ENCODE measurements at regions of chr12 and their contacts with region 1.

Region 1: GRCh38 chr12:48681738-48682532 is at the start of gene KANSL2:
- DNase-seq: peak; percentile 99
- H3K4me3 Mint-ChIP-seq: peak within 1 kb of the TSS; percentile 92
- H3K27ac Mint-ChIP-seq: peak within 1 kb of the TSS; percentile 98
- H3K4me1 Mint-ChIP-seq: peaks cover 42% of the 10 kb centered on the region
- H3K27me3 Mint-ChIP-seq: no peaks in the 10 kb centered on the region
- total RNA-seq, gene KANSL2: 44.1 to 44.5 TPM

Region 2: DNA sequence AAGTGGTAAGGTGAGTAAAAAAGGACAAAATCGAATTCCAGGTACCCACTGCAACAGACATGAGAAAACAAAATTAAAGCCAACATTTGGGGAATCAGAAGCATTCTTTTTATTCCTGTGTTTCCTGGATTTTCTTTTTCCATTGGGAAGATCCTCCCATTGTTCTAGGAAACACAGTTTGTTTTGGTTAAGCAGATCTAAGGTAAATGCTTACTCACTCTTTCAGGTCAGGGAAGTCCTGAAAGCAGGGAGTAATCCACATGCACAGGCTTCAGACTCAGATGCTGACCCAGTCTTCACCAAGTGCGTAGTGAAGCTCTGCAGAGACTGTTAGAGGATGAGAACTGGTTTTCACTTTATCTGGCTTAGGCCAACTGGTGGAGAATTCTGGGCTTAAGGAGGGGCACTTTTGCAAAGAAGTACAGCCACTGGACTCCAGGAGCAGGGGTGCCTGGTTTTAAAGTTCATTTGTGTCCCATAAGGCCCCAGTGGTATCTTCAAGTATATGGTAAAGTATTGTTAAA is 1033.8 kb before region 1 on chr12:
- CTCF ChIA-PET with region 1: no interaction called
- POLR2A ChIA-PET with region 1: no interaction called
- DNase-seq: no peak
- H3K4me3 Mint-ChIP-seq: no peak overlapping the region
- H3K27ac Mint-ChIP-seq: no peak overlapping the region
- H3K4me1 Mint-ChIP-seq: peaks cover 11% of the 10 kb centered on the region
- H3K27me3 Mint-ChIP-seq: no peaks in the 10 kb centered on the region

Region 3: DNA sequence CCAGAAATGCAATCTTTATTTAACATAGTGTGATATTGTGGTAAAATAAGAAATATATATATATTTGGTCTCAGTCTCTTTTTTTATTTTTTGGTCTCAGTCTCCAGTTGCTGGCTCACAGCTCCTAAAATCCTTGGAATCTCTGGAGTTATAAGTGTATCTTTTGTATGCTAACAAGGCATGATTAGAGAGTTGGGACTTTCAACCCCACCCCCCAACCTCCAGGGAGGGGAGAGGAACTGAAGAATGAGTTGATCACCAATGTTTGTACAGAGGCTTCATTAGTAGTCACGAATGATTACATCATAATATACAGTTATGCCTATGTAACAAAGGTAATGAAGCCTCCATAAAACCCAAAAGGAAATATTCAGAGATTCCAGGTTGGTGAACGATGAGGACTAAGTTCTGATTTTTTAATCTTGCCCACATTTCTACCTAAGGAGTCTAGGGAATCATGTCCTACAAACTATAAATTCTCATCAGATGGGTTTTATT is 89.3 kb before region 1 on chr12:
- CTCF ChIA-PET with region 1: no interaction called
- POLR2A ChIA-PET with region 1: no interaction called
- DNase-seq: no peak
- H3K4me3 Mint-ChIP-seq: no peak overlapping the region
- H3K27ac Mint-ChIP-seq: no peak overlapping the region
- H3K4me1 Mint-ChIP-seq: no peaks in the 10 kb centered on the region
- H3K27me3 Mint-ChIP-seq: peaks cover 33% of the 10 kb centered on the region

Region 4: DNA sequence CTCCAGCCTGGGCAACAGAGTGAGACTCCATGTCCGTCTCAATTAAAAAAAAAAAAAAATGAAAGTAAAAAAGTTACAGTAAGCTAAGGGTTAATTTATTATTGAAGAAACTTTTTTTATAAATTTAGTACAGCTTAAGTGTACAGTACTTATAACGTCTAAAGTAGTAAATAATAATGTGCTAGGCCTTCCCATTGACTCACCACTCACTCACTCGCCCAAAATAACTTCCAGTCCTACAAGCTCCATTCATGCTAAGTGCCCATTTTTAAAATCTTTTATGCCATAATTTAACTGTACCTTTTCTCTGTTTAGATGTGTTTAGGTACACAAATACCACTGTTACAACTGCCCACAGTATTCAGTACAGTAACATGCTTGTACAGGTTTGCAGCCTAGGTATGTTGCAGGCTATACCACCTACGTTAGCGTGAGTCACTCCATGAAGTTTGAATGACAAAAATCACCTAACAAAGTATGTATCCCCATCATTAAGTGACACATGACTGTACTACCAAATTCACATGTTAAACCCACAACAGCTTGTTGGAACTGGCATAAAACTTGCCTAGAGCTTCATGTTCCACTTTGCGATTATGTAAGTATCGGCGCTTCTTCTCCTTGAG is 10.6 kb before region 1 on chr12:
- CTCF ChIA-PET with region 1: interaction called, 10 read pairs
- POLR2A ChIA-PET with region 1: no interaction called
- DNase-seq: no peak
- H3K4me3 Mint-ChIP-seq: no peak overlapping the region
- H3K27ac Mint-ChIP-seq: no peak overlapping the region
- H3K4me1 Mint-ChIP-seq: peaks cover 10% of the 10 kb centered on the region
- H3K27me3 Mint-ChIP-seq: no peaks in the 10 kb centered on the region